Left ventricle myocardium inferior (tissue), 1 donor: ENCODE measurements at regions of chr2 and their contacts with region 1.

Region 1: DNA sequence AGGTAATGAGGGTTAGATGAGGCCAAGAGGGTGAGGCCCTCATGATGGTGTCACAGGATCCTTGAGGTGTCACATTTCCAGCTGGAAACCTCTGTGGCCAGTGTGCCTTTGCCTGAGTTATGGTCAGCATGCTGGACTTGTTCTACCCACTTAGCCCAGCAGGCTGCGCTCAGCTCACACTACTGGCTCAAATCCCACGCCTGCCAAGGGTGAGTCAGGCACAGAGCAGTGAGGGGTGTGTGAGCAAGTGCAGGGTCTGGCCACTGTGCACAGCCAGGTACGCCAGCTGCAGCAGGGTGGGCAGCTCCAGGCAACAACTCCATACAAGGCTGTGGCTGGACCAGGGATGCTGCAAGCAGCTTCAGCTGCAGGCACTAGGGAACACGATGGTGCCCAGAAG is 616.6 kb upstream of the FSHR start:
- DNase-seq: peak; percentile 20
- H3K4me3 ChIP-seq: no peak overlapping the region
- H3K27ac ChIP-seq: no peak overlapping the region
- H3K4me1 ChIP-seq: no peaks in the 10 kb centered on the region
- H3K27me3 ChIP-seq: no peaks in the 10 kb centered on the region
- CTCF ChIP-seq: peak; percentile 51

Region 2: DNA sequence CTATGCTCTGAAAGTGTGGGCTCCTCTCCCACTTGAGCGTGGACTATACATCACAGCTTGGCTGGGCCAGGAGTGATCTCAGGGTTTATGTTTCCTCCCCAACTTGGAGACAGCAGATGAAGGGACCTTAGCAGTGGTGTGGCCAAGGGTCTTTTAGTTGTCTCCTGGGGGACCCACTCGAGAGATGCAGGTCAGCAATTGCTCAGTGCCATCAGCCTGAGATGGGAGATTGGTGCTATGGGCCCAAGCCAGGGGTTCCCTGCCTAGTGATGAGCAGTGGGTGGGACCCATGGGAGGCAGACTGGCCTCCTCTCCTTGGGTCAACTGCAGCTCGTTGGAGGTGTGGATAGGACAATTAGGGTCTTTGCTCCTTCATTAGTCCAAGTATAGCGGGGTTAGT is 106.1 kb before region 1 on chr2:
- intact Hi-C with region 1: no loop called
- DNase-seq: no peak
- H3K4me3 ChIP-seq: no peak overlapping the region
- H3K27ac ChIP-seq: no peak overlapping the region
- H3K4me1 ChIP-seq: no peaks in the 10 kb centered on the region
- H3K27me3 ChIP-seq: no peaks in the 10 kb centered on the region
- CTCF ChIP-seq: no peak

Region 3: GRCh38 chr2:49702740-49703139 is 68.2 kb before region 1 on chr2:
- intact Hi-C with region 1: no loop called
- DNase-seq: no peak
- H3K4me3 ChIP-seq: no peak overlapping the region
- H3K27ac ChIP-seq: no peak overlapping the region
- H3K4me1 ChIP-seq: no peaks in the 10 kb centered on the region
- H3K27me3 ChIP-seq: no peaks in the 10 kb centered on the region
- CTCF ChIP-seq: no peak

Region 4: GRCh38 chr2:50143822-50144575 is 373.1 kb after region 1 on chr2:
- intact Hi-C with region 1: loop called (anchors 10 kb)
- DNase-seq: no peak
- H3K4me3 ChIP-seq: peak overlapping the region; percentile 58
- H3K27ac ChIP-seq: peak overlapping the region; percentile 9
- H3K4me1 ChIP-seq: no peaks in the 10 kb centered on the region
- H3K27me3 ChIP-seq: no peaks in the 10 kb centered on the region
- CTCF ChIP-seq: peak; percentile 72